Gastrocnemius medialis (tissue), 4 donors: ENCODE measurements at regions of chr11 and their contacts with region 1.

Region 1: DNA sequence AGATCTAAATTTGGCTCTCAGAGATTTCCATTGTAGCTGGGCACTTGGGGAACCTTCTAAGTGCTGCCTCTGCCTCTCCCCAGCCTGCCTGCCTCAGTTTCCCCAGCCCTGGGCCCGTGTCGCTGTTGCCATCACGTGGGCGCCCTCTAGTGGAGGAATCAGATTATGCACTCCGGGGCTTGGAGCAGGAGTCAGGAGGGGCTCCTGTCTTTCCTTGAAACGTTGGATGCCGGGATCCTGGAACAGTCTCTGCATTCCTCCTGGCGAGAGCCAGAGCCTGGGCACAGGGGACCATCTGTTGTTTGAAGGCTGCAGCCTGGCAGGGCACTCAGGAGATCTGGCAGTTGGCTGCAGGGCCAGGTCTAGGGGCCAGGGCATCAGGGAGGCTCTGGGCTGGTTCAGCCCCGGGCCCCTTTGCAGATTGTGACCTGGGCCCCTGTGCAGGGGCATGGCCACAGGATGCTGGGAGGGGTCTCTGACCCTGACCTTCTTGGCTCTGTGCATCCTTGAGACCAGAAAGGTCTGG is 71.6 kb downstream of the LRP5 start:
- DNase-seq: peak in 1 of 2 donors; percentile 45
- ATAC-seq: peak in 1 of 2 donors; percentile 58
- H3K4me3 ChIP-seq: no peak overlapping the region
- H3K27ac ChIP-seq: no peak overlapping the region
- H3K4me1 ChIP-seq: peaks cover 23 to 25% of the 10 kb centered on the region in 2 donors
- H3K27me3 ChIP-seq: no peaks in the 10 kb centered on the region
- CTCF ChIP-seq: peak; percentile 85 to 94 (median 90)
- POLR2A ChIP-seq: no peak

Region 2: DNA sequence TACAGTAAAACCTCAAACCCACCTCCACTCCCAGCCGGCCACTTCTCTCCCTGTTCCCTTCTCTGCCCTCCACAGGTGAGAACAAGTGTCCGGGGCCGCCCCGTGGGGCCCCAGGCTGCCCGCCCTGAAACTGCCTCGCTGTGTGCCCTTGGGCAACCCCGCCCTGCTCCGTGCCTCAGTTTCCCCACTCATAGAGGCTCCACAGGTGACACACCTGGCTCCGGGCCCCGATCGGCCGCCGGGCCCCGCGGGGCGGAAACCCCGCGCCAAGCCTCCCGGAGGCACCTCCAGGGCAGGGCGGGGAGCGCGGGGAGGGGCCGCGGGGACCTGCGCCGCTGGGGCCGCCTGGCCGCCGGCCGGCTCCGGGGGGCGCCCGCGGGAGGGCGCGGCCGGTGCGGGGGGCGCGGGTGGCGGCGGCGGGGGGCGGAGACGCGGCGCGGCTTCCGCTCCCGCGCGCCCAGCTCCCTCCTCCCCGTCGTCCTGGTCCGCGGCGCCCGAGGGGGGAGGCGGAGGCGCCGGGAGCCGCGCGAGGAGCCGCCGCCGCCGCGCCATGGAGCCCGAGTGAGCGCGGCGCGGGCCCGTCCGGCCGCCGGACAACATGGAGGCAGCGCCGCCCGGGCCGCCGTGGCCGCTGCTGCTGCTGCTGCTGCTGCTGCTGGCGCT is 71.8 kb before region 1 on chr11 and contains the start of gene LRP5:
- in situ Hi-C with region 1: no loop called
- intact Hi-C with region 1: loop called (anchors 5 kb)
- DNase-seq: no peak
- ATAC-seq: peak; percentile 40 to 42
- H3K4me3 ChIP-seq: peak within 1 kb of the TSS; percentile 63 to 89 (median 70)
- H3K27ac ChIP-seq: peak within 1 kb of the TSS; percentile 59 to 85 (median 78)
- H3K4me1 ChIP-seq: peaks cover 28 to 49% of the 10 kb centered on the region in 2 donors
- H3K27me3 ChIP-seq: no peaks in the 10 kb centered on the region
- CTCF ChIP-seq: no peak
- POLR2A ChIP-seq: peak in 1 of 2 donors; percentile 12
- total RNA-seq, gene LRP5: 3.7 to 12.3 (median 8.1) TPM

Region 3: DNA sequence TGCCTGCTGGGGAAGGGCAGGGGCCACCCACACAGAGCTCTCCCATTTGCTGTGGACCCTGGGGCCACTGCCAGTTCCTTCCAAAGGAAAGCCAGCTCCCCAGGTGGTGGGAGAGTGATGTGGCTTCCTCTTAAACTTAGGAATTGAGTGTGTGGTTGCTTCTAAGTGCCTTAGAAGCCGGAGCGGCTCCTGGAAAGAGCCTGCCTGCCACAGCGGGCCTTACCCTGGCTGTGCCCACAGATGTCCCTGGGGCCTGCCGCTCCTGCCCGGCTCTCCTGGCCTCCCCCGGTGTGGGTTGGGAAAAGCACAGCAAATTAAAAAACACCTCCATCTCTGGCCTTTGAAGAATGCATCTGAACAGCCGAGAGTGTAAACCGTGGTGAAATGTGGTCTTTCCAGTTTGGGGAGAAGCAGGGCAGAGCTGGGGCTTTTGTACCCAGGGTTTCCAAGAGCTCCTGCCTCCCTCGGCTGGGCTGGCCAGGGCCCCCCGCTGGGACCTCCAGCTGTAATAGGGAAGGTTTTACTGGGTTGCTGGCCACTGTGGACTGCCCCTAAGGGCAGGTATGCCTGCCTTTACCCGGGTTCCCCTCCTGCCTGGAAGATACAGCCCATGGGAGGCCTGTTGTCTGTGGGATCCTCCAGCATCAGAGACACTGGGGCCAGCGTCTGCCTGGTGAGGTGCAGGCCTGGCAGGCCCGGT is 41.4 kb before region 1 on chr11:
- in situ Hi-C with region 1: no loop called
- intact Hi-C with region 1: no loop called
- DNase-seq: no peak
- ATAC-seq: no peak
- H3K4me3 ChIP-seq: no peak overlapping the region
- H3K27ac ChIP-seq: no peak overlapping the region
- H3K4me1 ChIP-seq: peaks cover 20 to 24% of the 10 kb centered on the region in 2 donors
- H3K27me3 ChIP-seq: no peaks in the 10 kb centered on the region
- CTCF ChIP-seq: no peak
- POLR2A ChIP-seq: no peak

Region 4: GRCh38 chr11:68447015-68447801 is 63.2 kb after region 1 on chr11:
- in situ Hi-C with region 1: no loop called
- intact Hi-C with region 1: loop called (anchors 5 kb)
- DNase-seq: peak; percentile 51 to 62
- ATAC-seq: peak; percentile 86 to 87
- H3K4me3 ChIP-seq: no peak overlapping the region
- H3K27ac ChIP-seq: no peak overlapping the region
- H3K4me1 ChIP-seq: no peaks in the 10 kb centered on the region
- H3K27me3 ChIP-seq: no peaks in the 10 kb centered on the region
- CTCF ChIP-seq: peak; percentile 80 to 96 (median 95)
- POLR2A ChIP-seq: no peak